ENCODE measurements at regions of chr14 and their contacts with region 1.

Region 1: GRCh38 chr14:58107947-58108552 is 44.0 kb downstream of the ARMH4 start:
- DNase-seq: peak; percentile 30 to 48 (median 38)
- H3K4me3 ChIP-seq: no peak overlapping the region
- H3K4me3 Mint-ChIP-seq: no peak overlapping the region
- H3K27ac ChIP-seq: no peak overlapping the region
- H3K27ac Mint-ChIP-seq: peak overlapping the region in 1 of 7 donors; percentile 44
- H3K4me1 ChIP-seq: no peaks in the 10 kb centered on the region
- H3K4me1 Mint-ChIP-seq: no peaks in the 10 kb centered on the region
- H3K27me3 ChIP-seq: no peaks in the 10 kb centered on the region
- H3K27me3 Mint-ChIP-seq: peaks cover 10% of the 10 kb centered on the region in 2 donors

Region 2: DNA sequence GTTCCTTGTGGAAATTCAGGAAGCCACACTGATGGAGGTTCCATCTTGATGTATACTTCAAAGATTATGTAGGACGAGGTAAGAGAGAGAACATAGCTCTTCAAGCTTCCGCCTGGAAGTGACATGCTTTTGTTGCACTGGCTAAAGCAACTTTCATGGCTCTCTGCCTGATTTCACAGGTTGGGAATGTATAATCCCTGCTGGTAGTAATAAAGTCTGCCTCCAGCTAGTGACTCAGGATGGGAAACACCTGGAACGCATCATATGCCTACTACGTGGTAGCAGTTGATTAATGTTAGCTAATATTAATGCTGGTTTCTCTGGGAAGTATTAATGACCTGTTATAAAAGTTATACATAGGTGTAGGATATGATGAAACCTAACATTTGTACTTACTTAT is 1918.7 kb before region 1 on chr14:
- CTCF ChIA-PET with region 1: no interaction called
- POLR2A ChIA-PET with region 1: no interaction called
- intact Hi-C with region 1: no loop called
- DNase-seq: no peak
- H3K4me3 ChIP-seq: no peak overlapping the region
- H3K4me3 Mint-ChIP-seq: no peak overlapping the region
- H3K27ac ChIP-seq: no peak overlapping the region
- H3K27ac Mint-ChIP-seq: no peak overlapping the region
- H3K4me1 ChIP-seq: no peaks in the 10 kb centered on the region
- H3K4me1 Mint-ChIP-seq: peaks cover 4 to 15% (median 5%) of the 10 kb centered on the region in 4 donors
- H3K27me3 ChIP-seq: no peaks in the 10 kb centered on the region
- H3K27me3 Mint-ChIP-seq: peaks cover 0 to 3% of the 10 kb centered on the region in 2 donors

Region 3: DNA sequence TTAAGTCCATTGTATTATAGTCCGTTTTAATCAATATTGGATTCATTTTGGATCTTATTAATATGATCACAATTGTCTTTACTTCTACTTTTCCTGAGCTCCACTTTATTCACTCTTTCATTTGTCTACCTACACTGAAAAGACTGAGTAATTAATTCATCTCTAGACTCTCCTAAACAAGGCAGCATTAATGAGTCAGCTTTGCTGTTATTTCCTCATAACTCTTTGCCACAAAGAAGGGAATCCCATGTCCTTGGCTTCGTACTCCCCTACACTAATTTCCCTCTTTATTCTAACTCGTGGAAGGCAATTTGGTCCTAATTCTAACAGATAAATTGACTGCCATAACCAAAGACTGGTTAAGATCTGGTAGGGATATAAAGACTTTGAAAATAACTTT is 48.0 kb before region 1 on chr14:
- CTCF ChIA-PET with region 1: no interaction called
- POLR2A ChIA-PET with region 1: no interaction called
- intact Hi-C with region 1: no loop called
- DNase-seq: no peak
- H3K4me3 ChIP-seq: no peak overlapping the region
- H3K4me3 Mint-ChIP-seq: no peak overlapping the region
- H3K27ac ChIP-seq: no peak overlapping the region
- H3K27ac Mint-ChIP-seq: no peak overlapping the region
- H3K4me1 ChIP-seq: no peaks in the 10 kb centered on the region
- H3K4me1 Mint-ChIP-seq: no peaks in the 10 kb centered on the region
- H3K27me3 ChIP-seq: peaks cover 5% of the 10 kb centered on the region
- H3K27me3 Mint-ChIP-seq: peaks cover 12% of the 10 kb centered on the region in 2 donors

Region 4: GRCh38 chr14:58166005-58166983 is 58.2 kb after region 1 on chr14:
- CTCF ChIA-PET with region 1: interaction called, 6 read pairs
- POLR2A ChIA-PET with region 1: no interaction called
- intact Hi-C with region 1: loop called (anchors 1 kb)
- DNase-seq: peak; percentile 36 to 52 (median 51)
- H3K4me3 ChIP-seq: no peak overlapping the region
- H3K4me3 Mint-ChIP-seq: no peak overlapping the region
- H3K27ac ChIP-seq: no peak overlapping the region
- H3K27ac Mint-ChIP-seq: no peak overlapping the region
- H3K4me1 ChIP-seq: no peaks in the 10 kb centered on the region
- H3K4me1 Mint-ChIP-seq: peaks cover 0 to 10% (median 5%) of the 10 kb centered on the region in 4 donors
- H3K27me3 ChIP-seq: peaks cover 3% of the 10 kb centered on the region
- H3K27me3 Mint-ChIP-seq: peaks cover 5% of the 10 kb centered on the region in 2 donors

Region 5: GRCh38 chr14:58239244-58240195 is 131.5 kb after region 1 on chr14:
- CTCF ChIA-PET with region 1: no interaction called
- POLR2A ChIA-PET with region 1: no interaction called
- intact Hi-C with region 1: loop called (anchors 1 kb)
- DNase-seq: peak; percentile 84 to 88 (median 87)
- H3K4me3 ChIP-seq: peak overlapping the region; percentile 82 to 84
- H3K4me3 Mint-ChIP-seq: no peak overlapping the region
- H3K27ac ChIP-seq: peak overlapping the region; percentile 57
- H3K27ac Mint-ChIP-seq: no peak overlapping the region
- H3K4me1 ChIP-seq: peaks cover 11% of the 10 kb centered on the region
- H3K4me1 Mint-ChIP-seq: peaks cover 17 to 23% (median 20%) of the 10 kb centered on the region in 4 donors
- H3K27me3 ChIP-seq: no peaks in the 10 kb centered on the region
- H3K27me3 Mint-ChIP-seq: peaks cover 0 to 2% of the 10 kb centered on the region in 2 donors

Region 6: DNA sequence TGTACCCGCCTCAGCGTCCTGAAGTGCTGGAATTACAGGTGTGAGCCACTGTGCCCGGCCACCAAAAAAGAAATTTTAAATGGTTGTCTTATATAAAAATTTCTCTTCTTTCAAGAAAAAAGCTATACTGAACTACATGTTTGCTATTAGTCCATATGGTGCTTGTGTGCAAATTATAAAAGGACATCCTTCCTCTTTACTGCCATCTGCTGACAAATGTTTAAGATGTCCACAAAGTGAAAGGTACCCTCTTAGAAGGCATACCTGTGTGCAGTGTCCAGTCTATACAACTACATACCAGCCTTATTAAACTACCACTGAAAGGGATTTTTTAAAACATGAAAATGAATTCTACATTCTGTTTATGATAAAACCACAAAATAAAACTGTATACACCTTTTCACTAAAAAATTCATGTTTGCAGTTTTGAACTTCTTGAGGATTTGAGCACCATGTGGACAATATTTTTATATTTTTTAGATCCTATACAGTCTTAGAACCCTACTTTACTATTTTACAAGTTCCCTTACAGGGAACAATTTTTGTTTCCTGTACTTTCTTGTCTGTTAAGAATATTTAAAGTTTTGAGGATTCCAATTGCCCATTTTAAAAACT is 254.9 kb after region 1 on chr14:
- CTCF ChIA-PET with region 1: interaction called, 3 read pairs
- POLR2A ChIA-PET with region 1: no interaction called
- intact Hi-C with region 1: loop called (anchors 1 kb)
- DNase-seq: peak in 4 of 5 donors; percentile 25 to 33 (median 28)
- H3K4me3 ChIP-seq: no peak overlapping the region
- H3K4me3 Mint-ChIP-seq: no peak overlapping the region
- H3K27ac ChIP-seq: no peak overlapping the region
- H3K27ac Mint-ChIP-seq: peak overlapping the region in 2 of 7 donors; percentile 17 to 19
- H3K4me1 ChIP-seq: no peaks in the 10 kb centered on the region
- H3K4me1 Mint-ChIP-seq: peaks cover 0 to 1% (median 0%) of the 10 kb centered on the region in 4 donors
- H3K27me3 ChIP-seq: no peaks in the 10 kb centered on the region
- H3K27me3 Mint-ChIP-seq: no peaks in the 10 kb centered on the region

Region 7: GRCh38 chr14:58395812-58396788 is 288.1 kb after region 1 on chr14 and contains the start of gene TOMM20L:
- CTCF ChIA-PET with region 1: interaction called, 18 read pairs
- POLR2A ChIA-PET with region 1: no interaction called
- intact Hi-C with region 1: loop called (anchors 1 kb)
- DNase-seq: peak; percentile 70 to 81 (median 72)
- H3K4me3 ChIP-seq: peak within 1 kb of the TSS; percentile 24 to 48
- H3K4me3 Mint-ChIP-seq: peak within 1 kb of the TSS; percentile 83 to 91 (median 88)
- H3K27ac ChIP-seq: peak within 1 kb of the TSS; percentile 56
- H3K27ac Mint-ChIP-seq: peak within 1 kb of the TSS; percentile 88 to 95 (median 93)
- H3K4me1 ChIP-seq: peaks cover 12% of the 10 kb centered on the region
- H3K4me1 Mint-ChIP-seq: peaks cover 7 to 21% (median 10%) of the 10 kb centered on the region in 4 donors
- H3K27me3 ChIP-seq: no peaks in the 10 kb centered on the region
- H3K27me3 Mint-ChIP-seq: no peaks in the 10 kb centered on the region
- total RNA-seq, gene TOMM20L: not detected

Region 8: DNA sequence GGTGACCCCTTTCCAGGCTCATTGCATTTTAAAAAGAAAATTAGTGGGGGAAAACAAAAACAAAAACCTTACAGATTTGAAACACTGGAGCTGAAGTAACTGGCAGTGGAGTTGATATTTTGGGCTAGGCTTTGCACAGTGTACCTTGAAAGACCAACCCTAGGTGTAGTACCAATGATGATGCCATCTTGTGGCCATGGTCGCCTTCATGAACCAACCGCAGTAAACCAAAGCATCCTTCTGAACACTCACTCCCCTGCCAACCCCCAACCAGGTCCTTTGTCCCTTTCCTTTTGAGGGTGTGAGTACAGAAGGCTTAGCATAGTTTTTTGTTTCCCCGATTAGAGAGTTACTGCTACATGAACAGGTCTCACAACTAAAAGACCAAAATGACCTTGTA is 293.5 kb after region 1 on chr14:
- CTCF ChIA-PET with region 1: interaction called, 18 read pairs
- POLR2A ChIA-PET with region 1: no interaction called
- intact Hi-C with region 1: loop called (anchors 1 kb)
- DNase-seq: no peak
- H3K4me3 ChIP-seq: no peak overlapping the region
- H3K4me3 Mint-ChIP-seq: no peak overlapping the region
- H3K27ac ChIP-seq: no peak overlapping the region
- H3K27ac Mint-ChIP-seq: no peak overlapping the region
- H3K4me1 ChIP-seq: peaks cover 2% of the 10 kb centered on the region
- H3K4me1 Mint-ChIP-seq: peaks cover 0 to 11% (median 2%) of the 10 kb centered on the region in 4 donors
- H3K27me3 ChIP-seq: no peaks in the 10 kb centered on the region
- H3K27me3 Mint-ChIP-seq: no peaks in the 10 kb centered on the region

Region 9: DNA sequence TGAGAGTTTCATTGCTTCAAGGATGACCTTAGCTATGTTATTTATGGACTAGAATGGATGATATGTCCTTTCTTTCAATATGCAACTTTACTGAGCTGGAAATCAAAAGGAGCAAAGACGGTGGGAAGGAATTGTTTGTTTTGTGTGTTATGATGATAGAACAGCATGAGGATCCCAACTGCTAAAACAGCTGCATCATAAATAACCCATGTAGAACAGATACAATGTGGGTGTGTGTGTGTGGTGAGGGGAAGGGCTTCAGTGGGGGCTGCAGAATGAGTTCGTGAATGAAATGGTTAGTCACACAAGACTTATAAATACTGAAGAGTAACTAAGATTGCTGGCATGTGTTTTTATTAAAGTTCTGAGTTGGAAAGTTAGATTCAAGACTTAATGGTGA is 609.8 kb after region 1 on chr14:
- CTCF ChIA-PET with region 1: no interaction called
- POLR2A ChIA-PET with region 1: no interaction called
- intact Hi-C with region 1: no loop called
- DNase-seq: no peak
- H3K4me3 ChIP-seq: no peak overlapping the region
- H3K4me3 Mint-ChIP-seq: peak overlapping the region in 1 of 8 donors; percentile 4
- H3K27ac ChIP-seq: no peak overlapping the region
- H3K27ac Mint-ChIP-seq: no peak overlapping the region
- H3K4me1 ChIP-seq: no peaks in the 10 kb centered on the region
- H3K4me1 Mint-ChIP-seq: peaks cover 0 to 5% (median under 1%) of the 10 kb centered on the region in 4 donors
- H3K27me3 ChIP-seq: no peaks in the 10 kb centered on the region
- H3K27me3 Mint-ChIP-seq: peaks cover 3 to 4% of the 10 kb centered on the region in 2 donors

Measured in CD4-positive, alpha-beta memory T cell (primary cell).